ENCODE measurements at regions of chr17 and their contacts with region 1.

Region 1: DNA sequence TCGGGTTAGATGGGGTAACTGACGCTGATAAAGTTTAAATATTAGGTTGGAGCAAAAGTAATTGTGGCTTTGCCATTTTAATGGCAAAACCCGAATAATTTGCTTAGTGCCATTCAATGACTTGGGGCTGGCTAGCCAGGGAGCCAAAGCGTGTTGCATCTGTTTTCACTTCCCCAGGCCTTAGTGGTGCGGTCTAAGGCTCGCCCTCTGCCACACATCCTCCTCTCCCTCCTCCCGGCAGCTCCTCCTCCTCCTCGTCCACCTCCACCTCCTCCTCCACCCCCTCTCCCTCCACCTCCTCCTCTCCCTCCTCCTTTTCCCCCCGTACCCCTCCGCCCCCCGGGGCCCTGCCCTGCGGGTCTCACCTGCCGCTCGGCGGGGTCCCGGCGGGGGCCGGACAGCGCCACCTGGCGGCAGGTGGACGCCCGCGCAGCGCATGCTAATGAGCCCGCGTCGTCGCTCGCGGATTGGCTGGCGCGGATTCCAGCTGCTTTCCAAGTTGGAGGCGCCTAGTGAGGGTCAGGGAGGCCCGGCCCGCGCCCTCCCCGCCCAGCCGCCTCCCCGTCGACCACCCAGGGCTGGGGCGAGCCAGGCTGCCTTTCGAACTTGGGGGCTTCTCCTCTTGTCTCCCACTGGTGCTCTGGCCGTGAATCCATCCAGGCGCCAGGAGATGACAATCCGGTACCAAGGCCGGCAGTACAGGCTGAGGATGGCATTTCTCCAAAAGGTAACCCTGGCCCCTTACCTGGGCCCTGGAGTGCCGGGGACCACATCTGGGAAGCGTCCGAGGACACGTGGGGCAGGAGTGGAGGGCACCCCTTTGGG is 36.6 kb upstream of the RGS9 start:
- DNase-seq: peak; percentile 84
- CTCF ChIP-seq: peak; percentile 94

Region 2: DNA sequence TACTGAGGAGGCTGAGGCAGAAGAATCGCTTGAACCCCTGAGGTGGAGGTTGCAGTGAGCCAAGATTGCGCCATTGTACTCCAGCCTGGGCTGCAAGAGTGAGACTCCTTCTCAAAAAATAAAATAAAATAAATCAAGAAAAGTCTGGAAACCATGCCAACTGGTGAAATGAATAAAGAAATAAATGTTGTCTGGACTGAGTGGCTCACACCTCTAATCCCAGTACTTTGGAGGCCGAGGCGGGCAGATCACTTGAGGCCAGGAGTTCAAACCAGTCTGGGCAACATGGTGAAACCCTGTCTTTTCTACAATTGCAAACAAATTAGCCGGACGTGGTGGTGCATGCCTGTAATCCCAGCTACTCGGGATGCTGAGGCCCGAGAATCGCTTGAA is 180.5 kb before region 1 on chr17:
- CTCF ChIA-PET with region 1: interaction called, 13 read pairs
- POLR2A ChIA-PET with region 1: no interaction called
- DNase-seq: no peak
- CTCF ChIP-seq: no peak

Region 3: DNA sequence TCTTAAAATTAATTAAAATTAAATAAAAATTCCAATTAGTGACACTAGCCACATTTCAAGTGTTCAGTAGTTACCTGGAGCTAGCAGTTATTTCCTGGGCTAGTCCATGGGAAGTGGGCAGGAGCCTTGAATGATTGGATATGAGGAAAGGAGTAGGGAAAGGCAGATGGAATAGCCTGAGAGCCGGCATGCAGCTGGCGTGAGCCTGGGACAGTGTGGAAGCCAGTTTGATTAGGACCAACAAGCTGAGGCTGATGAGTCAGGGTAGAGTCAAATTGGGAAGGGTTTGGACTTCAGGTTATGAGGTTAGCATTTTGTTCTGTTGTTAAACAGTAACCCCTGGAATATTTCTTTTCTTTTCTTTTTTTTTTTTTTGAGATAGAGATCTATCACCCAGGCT is 28.7 kb before region 1 on chr17:
- CTCF ChIA-PET with region 1: interaction called, 24 read pairs
- POLR2A ChIA-PET with region 1: no interaction called
- DNase-seq: no peak
- CTCF ChIP-seq: no peak

Region 4: DNA sequence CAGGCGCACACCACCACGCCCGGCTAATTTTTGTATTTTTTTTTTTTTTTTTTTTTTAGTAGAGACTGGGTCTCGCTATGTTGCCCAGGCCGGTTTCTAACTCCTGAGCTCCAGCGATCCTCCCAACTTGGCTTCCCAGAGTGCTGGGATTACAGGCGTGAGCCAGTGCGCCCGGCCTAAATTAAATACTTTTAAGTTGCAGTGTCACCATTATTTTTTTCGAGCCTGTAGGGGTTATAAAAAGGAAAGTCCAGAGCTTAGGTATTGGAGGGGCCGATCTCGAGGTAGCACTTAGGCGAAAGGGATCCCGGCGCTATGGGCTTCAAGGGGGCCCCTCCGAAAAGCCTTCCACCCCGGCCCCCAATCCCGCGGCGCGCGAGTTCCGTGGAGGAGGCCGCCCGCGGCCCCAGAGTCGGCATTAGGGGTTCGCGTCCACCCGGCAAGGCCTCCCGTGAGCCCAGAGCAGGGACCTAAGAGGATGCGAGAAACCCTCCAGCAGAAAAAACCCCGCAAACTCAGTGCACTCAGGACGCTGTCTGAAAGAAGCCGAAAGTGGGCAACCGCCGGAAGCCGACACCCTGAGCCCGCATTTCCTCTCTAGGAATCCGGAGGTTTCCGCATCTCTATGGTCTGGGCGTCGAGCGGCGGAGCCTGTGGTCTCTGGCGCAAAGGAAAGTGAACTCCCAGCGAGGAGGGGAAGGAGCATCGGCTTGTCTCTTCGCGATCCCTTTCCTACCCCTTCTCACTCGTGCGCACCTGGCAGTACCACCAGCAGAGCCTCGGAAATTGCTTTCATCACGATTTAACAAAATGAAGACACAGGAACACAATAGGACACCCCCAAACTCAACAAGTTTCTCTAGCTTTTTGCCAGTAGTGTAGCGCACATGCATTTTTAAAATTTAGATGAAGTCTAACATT is 22.6 kb after region 1 on chr17:
- CTCF ChIA-PET with region 1: interaction called, 12 read pairs
- POLR2A ChIA-PET with region 1: no interaction called
- DNase-seq: peak; percentile 87
- CTCF ChIP-seq: no peak

Region 5: GRCh38 chr17:65181237-65182061 is 80.9 kb after region 1 on chr17:
- CTCF ChIA-PET with region 1: interaction called, 29 read pairs
- POLR2A ChIA-PET with region 1: no interaction called
- DNase-seq: peak; percentile 79
- CTCF ChIP-seq: no peak

Region 6: GRCh38 chr17:65656382-65657250 is 556.1 kb after region 1 on chr17:
- CTCF ChIA-PET with region 1: no interaction called
- POLR2A ChIA-PET with region 1: no interaction called
- DNase-seq: peak; percentile 37
- CTCF ChIP-seq: no peak

Measured in GM10248 (cell line).